ENCODE measurements at regions of chr9 and their contacts with region 1.

Region 1: GRCh38 chr9:126151031-126151685 is 175.5 kb upstream of the MVB12B start:
- DNase-seq: peak in 1 of 2 donors; percentile 43
- H3K4me3 ChIP-seq: no peak overlapping the region
- H3K27ac ChIP-seq: no peak overlapping the region
- H3K4me1 ChIP-seq: no peaks in the 10 kb centered on the region
- H3K27me3 ChIP-seq: peaks cover 0 to 52% of the 10 kb centered on the region in 2 donors
- CTCF ChIP-seq: no peak

Region 2: GRCh38 chr9:126093771-126094170 is 57.4 kb before region 1 on chr9:
- intact Hi-C with region 1: loop called (anchors 10 kb)
- DNase-seq: no peak
- H3K4me3 ChIP-seq: no peak overlapping the region
- H3K27ac ChIP-seq: no peak overlapping the region
- H3K4me1 ChIP-seq: no peaks in the 10 kb centered on the region
- H3K27me3 ChIP-seq: peaks cover 0 to 8% of the 10 kb centered on the region in 2 donors
- CTCF ChIP-seq: no peak